GM10248 (cell line): ENCODE measurements at regions of chr9 and their contacts with region 1.

Region 1: DNA sequence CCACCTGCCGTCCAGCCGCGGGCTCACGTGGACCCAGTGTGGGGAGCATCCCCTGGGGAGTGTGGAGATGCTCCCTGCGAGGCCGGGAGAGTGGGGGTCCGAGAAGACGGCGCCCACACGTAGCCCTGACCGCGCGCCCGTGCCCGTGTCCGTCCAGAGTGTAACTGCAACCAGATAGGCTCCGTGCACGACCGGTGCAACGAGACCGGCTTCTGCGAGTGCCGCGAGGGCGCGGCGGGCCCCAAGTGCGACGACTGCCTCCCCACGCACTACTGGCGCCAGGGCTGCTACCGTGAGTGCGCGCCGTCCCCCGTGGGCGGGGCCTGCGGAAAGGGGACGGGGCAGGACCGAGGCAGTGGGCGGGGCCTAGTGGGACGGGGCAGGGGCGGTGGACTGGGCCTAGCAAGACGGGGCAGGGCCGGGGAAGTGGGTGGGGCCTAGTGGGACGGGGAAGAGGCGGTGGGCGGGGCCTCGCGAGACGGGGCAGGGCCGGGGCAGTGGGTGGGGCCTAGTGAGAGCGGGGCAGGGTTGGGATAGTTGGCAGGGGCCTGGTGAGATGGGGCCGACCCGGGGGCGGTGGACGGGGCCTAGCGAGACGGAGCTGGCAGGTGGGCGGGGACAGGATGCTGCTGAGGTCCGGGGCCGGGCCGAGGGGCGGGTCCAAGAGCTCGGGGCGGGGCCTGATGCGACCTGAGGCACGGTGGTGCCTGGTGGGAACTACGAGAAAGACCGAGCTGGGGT is 79.1 kb downstream of the NTNG2 start:
- DNase-seq: peak; percentile 99
- CTCF ChIP-seq: no peak

Region 2: DNA sequence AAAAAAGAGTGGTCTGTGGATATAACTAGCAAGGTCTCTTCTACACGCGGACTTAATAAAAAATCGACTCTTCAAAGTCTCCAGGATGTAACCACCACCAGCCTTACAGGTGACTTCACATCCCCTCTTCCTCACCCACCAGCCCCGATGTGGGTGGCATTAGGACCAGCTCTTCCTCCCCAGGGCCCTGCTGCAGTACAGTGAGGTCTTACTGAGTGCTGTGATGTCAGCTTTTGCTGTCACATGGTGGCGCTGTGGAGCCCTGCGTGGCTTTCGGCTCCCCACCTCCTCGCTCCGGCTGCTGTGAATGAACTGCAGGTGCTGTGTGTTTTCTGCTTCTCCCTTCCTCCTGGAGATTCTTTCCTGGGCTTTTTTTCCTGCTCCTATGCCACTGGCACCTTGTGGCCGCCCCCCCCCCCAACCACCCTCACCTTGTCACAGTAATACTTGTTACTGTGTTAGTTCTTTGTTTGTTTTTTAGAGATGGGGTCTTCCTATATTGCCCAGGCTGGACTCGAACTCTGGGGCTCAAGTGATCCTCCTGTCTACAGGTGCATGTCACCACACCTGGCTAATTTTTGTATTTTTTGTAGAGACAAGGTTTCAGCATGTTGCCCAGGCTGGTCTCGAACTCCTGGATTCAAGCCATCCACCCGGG is 485.3 kb before region 1 on chr9:
- CTCF ChIA-PET with region 1: interaction called, 154 read pairs
- POLR2A ChIA-PET with region 1: no interaction called
- DNase-seq: peak; percentile 82
- CTCF ChIP-seq: peak; percentile 93

Region 3: DNA sequence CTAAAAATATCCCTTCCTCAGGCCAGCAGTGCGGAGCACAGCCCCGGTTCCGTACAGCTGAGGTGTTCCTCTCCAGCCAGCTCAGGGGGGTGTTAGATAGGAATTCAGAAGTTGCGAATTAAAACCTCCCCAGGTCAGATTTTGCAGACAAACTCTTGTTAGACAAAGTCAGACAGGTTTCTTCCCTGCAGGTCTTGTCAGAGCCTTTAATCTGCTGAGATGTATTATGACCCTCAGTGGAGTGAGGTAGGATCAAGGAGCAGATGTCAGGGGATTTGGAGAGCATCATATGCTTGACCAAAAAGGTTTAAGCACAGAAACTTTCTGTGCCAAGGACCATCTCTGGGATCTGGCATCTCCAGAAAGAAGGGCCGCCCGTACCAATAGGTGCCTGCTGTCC is 19.0 kb before region 1 on chr9:
- CTCF ChIA-PET with region 1: interaction called, 23 read pairs
- POLR2A ChIA-PET with region 1: no interaction called
- DNase-seq: no peak
- CTCF ChIP-seq: no peak

Region 4: DNA sequence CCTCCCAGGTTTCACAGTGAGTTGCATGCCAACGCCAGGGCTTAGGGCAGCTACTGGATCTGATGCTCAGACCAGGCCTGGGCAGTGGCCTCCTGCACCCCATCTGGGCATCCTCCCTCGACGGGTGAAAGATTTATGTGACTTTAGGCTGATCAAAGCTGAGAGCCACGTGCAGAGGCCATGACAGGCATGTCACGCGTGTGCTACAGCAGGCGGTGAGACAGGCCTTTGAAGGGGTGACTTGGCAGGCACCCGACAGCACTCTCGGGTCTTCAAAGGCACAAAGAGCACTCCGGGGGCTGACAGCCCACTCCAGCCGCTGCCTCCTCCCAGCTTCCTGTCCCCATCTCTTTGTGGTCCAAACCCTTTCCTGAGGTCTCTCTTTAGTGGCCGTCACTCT is 12.9 kb before region 1 on chr9:
- CTCF ChIA-PET with region 1: interaction called, 23 read pairs
- POLR2A ChIA-PET with region 1: no interaction called
- DNase-seq: no peak
- CTCF ChIP-seq: no peak

Region 5: GRCh38 chr9:132268725-132269352 is 27.9 kb after region 1 on chr9:
- CTCF ChIA-PET with region 1: interaction called, 12 read pairs
- POLR2A ChIA-PET with region 1: no interaction called
- DNase-seq: peak; percentile 60
- CTCF ChIP-seq: peak; percentile 82

Region 6: GRCh38 chr9:132447346-132447745 is 206.4 kb after region 1 on chr9:
- CTCF ChIA-PET with region 1: no interaction called
- POLR2A ChIA-PET with region 1: no interaction called
- DNase-seq: no peak
- CTCF ChIP-seq: no peak